ENCODE measurements at regions of chr3 and their contacts with region 1.

Region 1: GRCh38 chr3:167734498-167735232 is at the start of gene PDCD10:
- DNase-seq: peak; percentile 98
- H3K4me3 Mint-ChIP-seq: no peak within 1 kb of the TSS
- H3K27ac Mint-ChIP-seq: no peak within 1 kb of the TSS
- H3K4me1 Mint-ChIP-seq: peaks cover 37% of the 10 kb centered on the region
- H3K27me3 Mint-ChIP-seq: no peaks in the 10 kb centered on the region
- total RNA-seq, gene PDCD10: 46.6 to 55.7 TPM

Region 2: GRCh38 chr3:167380004-167380689 is 354.5 kb before region 1 on chr3 and contains the start of gene ZBBX:
- CTCF ChIA-PET with region 1: no interaction called
- intact Hi-C with region 1: loop called (anchors 1 kb)
- DNase-seq: peak; percentile 92
- H3K4me3 Mint-ChIP-seq: peak within 1 kb of the TSS; percentile 77
- H3K27ac Mint-ChIP-seq: no peak within 1 kb of the TSS
- H3K4me1 Mint-ChIP-seq: peaks cover 4% of the 10 kb centered on the region
- H3K27me3 Mint-ChIP-seq: peaks cover 12% of the 10 kb centered on the region
- total RNA-seq, gene ZBBX: not detected

Region 3: GRCh38 chr3:167662919-167663400 is 71.7 kb before region 1 on chr3:
- CTCF ChIA-PET with region 1: no interaction called
- intact Hi-C with region 1: no loop called
- DNase-seq: no peak
- H3K4me3 Mint-ChIP-seq: no peak overlapping the region
- H3K27ac Mint-ChIP-seq: no peak overlapping the region
- H3K4me1 Mint-ChIP-seq: no peaks in the 10 kb centered on the region
- H3K27me3 Mint-ChIP-seq: peaks cover 7% of the 10 kb centered on the region

Region 4: GRCh38 chr3:167691366-167691765 is 43.3 kb before region 1 on chr3:
- CTCF ChIA-PET with region 1: interaction called, 4 read pairs
- intact Hi-C with region 1: loop called (anchors 1 kb)
- DNase-seq: peak; percentile 56
- H3K4me3 Mint-ChIP-seq: no peak overlapping the region
- H3K27ac Mint-ChIP-seq: no peak overlapping the region
- H3K4me1 Mint-ChIP-seq: peaks cover 40% of the 10 kb centered on the region
- H3K27me3 Mint-ChIP-seq: no peaks in the 10 kb centered on the region

Region 5: GRCh38 chr3:167750272-167750971 is 15.8 kb after region 1 on chr3:
- CTCF ChIA-PET with region 1: no interaction called
- intact Hi-C with region 1: loop called (anchors 1 kb)
- DNase-seq: peak; percentile 8
- H3K4me3 Mint-ChIP-seq: no peak overlapping the region
- H3K27ac Mint-ChIP-seq: no peak overlapping the region
- H3K4me1 Mint-ChIP-seq: peaks cover 11% of the 10 kb centered on the region
- H3K27me3 Mint-ChIP-seq: no peaks in the 10 kb centered on the region

Region 6: GRCh38 chr3:167843886-167844285 is 109.2 kb after region 1 on chr3:
- CTCF ChIA-PET with region 1: no interaction called
- intact Hi-C with region 1: loop called (anchors 2 kb)
- DNase-seq: no peak
- H3K4me3 Mint-ChIP-seq: no peak overlapping the region
- H3K27ac Mint-ChIP-seq: no peak overlapping the region
- H3K4me1 Mint-ChIP-seq: peaks cover 14% of the 10 kb centered on the region
- H3K27me3 Mint-ChIP-seq: peaks cover 3% of the 10 kb centered on the region

Region 7: GRCh38 chr3:168095611-168096209 is 361.0 kb after region 1 on chr3 and contains the start of gene GOLIM4:
- CTCF ChIA-PET with region 1: no interaction called
- intact Hi-C with region 1: loop called (anchors 5 kb)
- DNase-seq: peak; percentile 55
- H3K4me3 Mint-ChIP-seq: peak within 1 kb of the TSS; percentile 80
- H3K27ac Mint-ChIP-seq: no peak within 1 kb of the TSS
- H3K4me1 Mint-ChIP-seq: peaks cover 7% of the 10 kb centered on the region
- H3K27me3 Mint-ChIP-seq: peaks cover 48% of the 10 kb centered on the region
- total RNA-seq, gene GOLIM4: 0.67 to 0.98 TPM